ENCODE measurements at regions of chr20 and their contacts with region 1.

Region 1: DNA sequence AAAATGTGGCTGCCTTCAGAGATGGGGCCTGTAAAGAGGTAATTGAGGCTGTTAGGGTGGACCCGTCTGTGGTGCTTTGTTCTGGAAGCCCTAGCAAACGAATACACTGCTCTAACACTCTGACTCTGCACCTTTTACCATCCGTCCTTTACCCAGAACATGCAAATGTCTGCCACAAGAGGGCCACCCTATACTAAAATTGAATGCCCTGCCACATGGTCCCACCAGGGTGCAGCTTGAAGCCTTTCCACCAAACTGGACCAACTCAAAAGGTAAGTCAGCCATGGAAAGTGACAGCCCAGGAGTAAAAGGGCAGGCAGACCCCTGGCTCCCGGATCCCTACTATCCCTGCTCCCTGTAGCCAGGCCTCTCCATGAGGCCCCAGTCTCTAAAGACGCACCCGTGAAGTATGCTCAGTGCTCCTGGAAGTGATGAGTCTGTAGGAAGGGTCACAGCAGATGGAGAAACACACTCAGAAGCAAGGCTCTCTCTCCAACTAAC is 5.8 kb upstream of the BFSP1 start:
- DNase-seq: peak; percentile 90
- H3K4me3 ChIP-seq: no peak overlapping the region
- H3K27ac ChIP-seq: no peak overlapping the region
- H3K4me1 ChIP-seq: peaks cover 28% of the 10 kb centered on the region
- H3K27me3 ChIP-seq: no peaks in the 10 kb centered on the region
- CTCF ChIP-seq: peak; percentile 90

Region 2: GRCh38 chr20:17419479-17420041 is 117.4 kb before region 1 on chr20:
- CTCF ChIA-PET with region 1: no interaction called
- POLR2A ChIA-PET with region 1: no interaction called
- intact Hi-C with region 1: no loop called
- DNase-seq: no peak
- H3K4me3 ChIP-seq: no peak overlapping the region
- H3K27ac ChIP-seq: no peak overlapping the region
- H3K4me1 ChIP-seq: no peaks in the 10 kb centered on the region
- H3K27me3 ChIP-seq: no peaks in the 10 kb centered on the region
- CTCF ChIP-seq: no peak

Region 3: GRCh38 chr20:17617551-17618223 is 80.7 kb after region 1 on chr20:
- CTCF ChIA-PET with region 1: interaction called, 5 read pairs
- POLR2A ChIA-PET with region 1: no interaction called
- intact Hi-C with region 1: loop called (anchors 1 kb)
- DNase-seq: peak; percentile 57
- H3K4me3 ChIP-seq: no peak overlapping the region
- H3K27ac ChIP-seq: no peak overlapping the region
- H3K4me1 ChIP-seq: peaks cover 11% of the 10 kb centered on the region
- H3K27me3 ChIP-seq: no peaks in the 10 kb centered on the region
- CTCF ChIP-seq: peak; percentile 68

Region 4: DNA sequence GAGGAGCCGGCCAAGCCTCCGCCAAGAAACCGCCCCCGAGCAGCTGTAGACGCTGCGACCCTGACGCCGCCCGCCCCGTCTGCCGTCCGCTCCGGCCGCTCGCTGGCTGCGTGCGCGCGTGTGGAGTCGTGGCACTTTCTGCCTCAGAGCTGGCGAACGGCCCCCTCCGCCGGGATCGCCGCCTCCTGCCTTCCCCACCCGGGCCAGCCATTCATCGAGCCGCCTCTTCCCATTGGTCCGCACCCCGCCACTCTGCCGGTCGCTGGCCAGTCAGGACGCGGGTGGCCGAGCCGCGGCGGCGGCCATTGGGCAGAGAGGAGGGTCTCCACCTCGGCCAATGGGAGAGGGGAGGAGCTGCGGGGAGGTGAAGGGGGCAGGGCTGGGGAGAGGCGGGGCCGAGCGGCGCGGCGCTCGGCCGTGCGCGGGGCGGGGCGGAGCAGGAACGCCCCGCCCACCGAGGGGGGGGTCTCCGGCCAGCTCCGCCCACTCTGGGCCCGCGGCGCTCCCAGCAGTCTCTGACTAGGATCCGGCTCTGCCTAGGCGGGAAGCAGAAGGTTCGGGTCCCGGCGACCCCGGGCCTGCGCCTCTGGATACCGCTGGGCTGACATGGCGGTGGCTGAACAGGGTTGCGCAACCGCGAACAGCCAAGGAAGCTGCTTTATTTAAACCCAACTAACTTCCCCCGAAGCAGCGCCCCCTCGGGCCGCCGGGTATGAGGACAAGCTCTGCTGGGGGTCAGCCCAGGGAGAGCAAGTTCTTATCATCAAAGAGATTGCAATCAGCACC is 145.3 kb after region 1 on chr20 and contains the start of gene RRBP1:
- CTCF ChIA-PET with region 1: interaction called, 4 read pairs
- POLR2A ChIA-PET with region 1: no interaction called
- intact Hi-C with region 1: loop called (anchors 10 kb)
- DNase-seq: peak; percentile 99
- H3K4me3 ChIP-seq: peak within 1 kb of the TSS; percentile 66
- H3K27ac ChIP-seq: peak within 1 kb of the TSS; percentile 70
- H3K4me1 ChIP-seq: peaks cover 16% of the 10 kb centered on the region
- H3K27me3 ChIP-seq: peaks cover 15% of the 10 kb centered on the region
- CTCF ChIP-seq: peak; percentile 90
- total RNA-seq, gene RRBP1: 75.9 and 82.8 TPM in 2 replicates

Region 5: GRCh38 chr20:17898548-17898994 is 361.6 kb after region 1 on chr20:
- CTCF ChIA-PET with region 1: interaction called, 7 read pairs
- POLR2A ChIA-PET with region 1: no interaction called
- intact Hi-C with region 1: loop called (anchors 2 kb)
- DNase-seq: peak; percentile 73
- H3K4me3 ChIP-seq: no peak overlapping the region
- H3K27ac ChIP-seq: no peak overlapping the region
- H3K4me1 ChIP-seq: peaks cover 7% of the 10 kb centered on the region
- H3K27me3 ChIP-seq: no peaks in the 10 kb centered on the region
- CTCF ChIP-seq: peak; percentile 88

Region 6: DNA sequence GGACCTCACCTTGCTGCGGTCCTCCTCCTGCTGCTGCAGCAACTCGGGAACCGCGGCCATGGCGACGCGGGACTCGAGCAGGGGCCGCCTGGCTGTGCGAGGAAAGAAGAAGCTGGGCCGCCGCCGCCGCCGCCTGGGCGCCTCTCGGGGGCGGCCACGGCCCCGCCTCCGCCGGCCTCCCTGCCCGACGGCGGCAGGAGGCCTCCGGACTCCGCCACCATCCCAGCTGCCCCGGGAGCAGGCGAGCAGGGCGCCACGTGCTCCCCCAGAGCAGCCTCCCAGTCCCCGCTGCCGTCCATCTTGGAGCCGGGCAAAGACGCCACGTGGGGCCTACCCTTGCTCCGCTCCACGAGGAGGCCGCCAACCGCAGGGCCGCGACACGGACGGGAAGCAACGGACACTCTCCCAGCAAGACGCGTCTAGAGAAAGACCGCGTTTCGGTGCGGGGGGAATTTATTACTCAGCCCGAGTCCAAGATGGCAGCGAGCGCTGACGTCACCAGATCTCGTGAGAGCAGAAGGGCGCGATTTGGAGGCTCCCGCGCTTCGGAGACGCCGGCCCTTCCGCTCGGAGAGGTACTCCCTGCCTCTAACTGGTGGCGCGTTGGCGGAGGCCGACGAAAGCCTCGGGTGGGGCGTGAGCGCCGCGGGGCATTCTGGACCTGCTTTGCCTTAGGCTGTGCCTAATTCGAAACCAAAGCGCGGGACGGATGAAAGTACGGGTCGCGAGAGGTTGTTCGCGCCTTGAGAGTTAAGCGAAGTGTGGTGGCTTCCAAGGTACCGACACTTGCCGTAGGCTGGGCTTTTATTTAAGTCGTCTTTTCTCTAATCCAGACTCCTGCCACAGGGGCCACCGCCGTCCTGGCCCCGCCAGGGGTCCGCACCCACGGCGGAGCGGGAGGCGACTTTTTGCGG is 431.6 kb after region 1 on chr20 and contains the starts of genes MGME1 and SNX5:
- CTCF ChIA-PET with region 1: interaction called, 3 read pairs
- POLR2A ChIA-PET with region 1: no interaction called
- intact Hi-C with region 1: loop called (anchors 10 kb)
- DNase-seq: peak; percentile 100
- H3K4me3 ChIP-seq: peak within 1 kb of the TSS; percentile 75
- H3K27ac ChIP-seq: peak within 1 kb of the TSS; percentile 99
- H3K4me1 ChIP-seq: peaks cover 39% of the 10 kb centered on the region
- H3K27me3 ChIP-seq: no peaks in the 10 kb centered on the region
- CTCF ChIP-seq: no peak
- total RNA-seq, gene MGME1: 39.1 and 41.4 TPM in 2 replicates
- total RNA-seq, gene SNX5: 171 and 188 TPM in 2 replicates

Region 7: GRCh38 chr20:17995967-17996819 is 459.2 kb after region 1 on chr20:
- CTCF ChIA-PET with region 1: no interaction called
- POLR2A ChIA-PET with region 1: no interaction called
- intact Hi-C with region 1: loop called (anchors 10 kb)
- DNase-seq: peak; percentile 78
- H3K4me3 ChIP-seq: no peak overlapping the region
- H3K27ac ChIP-seq: no peak overlapping the region
- H3K4me1 ChIP-seq: peaks cover 7% of the 10 kb centered on the region
- H3K27me3 ChIP-seq: no peaks in the 10 kb centered on the region
- CTCF ChIP-seq: peak; percentile 91